ENCODE measurements at regions of chr17 and their contacts with region 1.

Region 1: GRCh38 chr17:77054936-77055335 is 85.8 kb upstream of the SEC14L1 start:
- DNase-seq: no peak
- ATAC-seq: no peak
- H3K4me3 Mint-ChIP-seq: no peak overlapping the region
- H3K27ac Mint-ChIP-seq: no peak overlapping the region
- H3K4me1 Mint-ChIP-seq: no peaks in the 10 kb centered on the region
- H3K27me3 Mint-ChIP-seq: peaks cover 1% of the 10 kb centered on the region
- CTCF ChIP-seq: no peak

Region 2: DNA sequence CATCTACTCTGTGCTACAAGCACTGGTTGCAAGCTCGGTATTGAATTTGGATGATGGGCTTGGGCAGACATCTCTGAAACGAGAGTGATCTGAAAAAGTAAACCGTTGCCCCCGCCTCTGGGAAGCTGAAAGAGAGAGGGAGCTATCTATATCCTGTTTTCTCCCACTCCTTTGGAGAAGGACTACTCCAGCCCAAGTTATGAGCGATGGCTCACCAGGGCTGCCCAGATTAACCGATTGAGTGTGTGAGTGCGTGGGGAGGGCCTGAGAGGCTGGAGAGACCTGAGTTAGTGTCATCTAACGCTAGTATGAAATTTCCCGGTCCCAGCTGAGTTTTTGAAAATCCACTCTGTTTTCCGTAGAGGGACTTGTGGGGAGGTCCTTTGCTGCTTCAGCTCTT is 175.2 kb before region 1 on chr17:
- CTCF ChIA-PET with region 1: interaction called, 13 read pairs
- POLR2A ChIA-PET with region 1: no interaction called
- intact Hi-C with region 1: no loop called
- DNase-seq: no peak
- ATAC-seq: no peak
- H3K4me3 Mint-ChIP-seq: no peak overlapping the region
- H3K27ac Mint-ChIP-seq: no peak overlapping the region
- H3K4me1 Mint-ChIP-seq: no peaks in the 10 kb centered on the region
- H3K27me3 Mint-ChIP-seq: no peaks in the 10 kb centered on the region
- CTCF ChIP-seq: no peak

Region 3: GRCh38 chr17:77022766-77023165 is 32.2 kb before region 1 on chr17:
- CTCF ChIA-PET with region 1: interaction called, 14 read pairs
- POLR2A ChIA-PET with region 1: no interaction called
- intact Hi-C with region 1: no loop called
- DNase-seq: no peak
- ATAC-seq: no peak
- H3K4me3 Mint-ChIP-seq: no peak overlapping the region
- H3K27ac Mint-ChIP-seq: no peak overlapping the region
- H3K4me1 Mint-ChIP-seq: no peaks in the 10 kb centered on the region
- H3K27me3 Mint-ChIP-seq: no peaks in the 10 kb centered on the region
- CTCF ChIP-seq: no peak

Region 4: GRCh38 chr17:77068915-77069314 is 14.0 kb after region 1 on chr17:
- CTCF ChIA-PET with region 1: interaction called, 30 read pairs
- POLR2A ChIA-PET with region 1: no interaction called
- intact Hi-C with region 1: no loop called
- DNase-seq: no peak
- ATAC-seq: no peak
- H3K4me3 Mint-ChIP-seq: no peak overlapping the region
- H3K27ac Mint-ChIP-seq: no peak overlapping the region
- H3K4me1 Mint-ChIP-seq: no peaks in the 10 kb centered on the region
- H3K27me3 Mint-ChIP-seq: peaks cover 22% of the 10 kb centered on the region
- CTCF ChIP-seq: no peak

Region 5: DNA sequence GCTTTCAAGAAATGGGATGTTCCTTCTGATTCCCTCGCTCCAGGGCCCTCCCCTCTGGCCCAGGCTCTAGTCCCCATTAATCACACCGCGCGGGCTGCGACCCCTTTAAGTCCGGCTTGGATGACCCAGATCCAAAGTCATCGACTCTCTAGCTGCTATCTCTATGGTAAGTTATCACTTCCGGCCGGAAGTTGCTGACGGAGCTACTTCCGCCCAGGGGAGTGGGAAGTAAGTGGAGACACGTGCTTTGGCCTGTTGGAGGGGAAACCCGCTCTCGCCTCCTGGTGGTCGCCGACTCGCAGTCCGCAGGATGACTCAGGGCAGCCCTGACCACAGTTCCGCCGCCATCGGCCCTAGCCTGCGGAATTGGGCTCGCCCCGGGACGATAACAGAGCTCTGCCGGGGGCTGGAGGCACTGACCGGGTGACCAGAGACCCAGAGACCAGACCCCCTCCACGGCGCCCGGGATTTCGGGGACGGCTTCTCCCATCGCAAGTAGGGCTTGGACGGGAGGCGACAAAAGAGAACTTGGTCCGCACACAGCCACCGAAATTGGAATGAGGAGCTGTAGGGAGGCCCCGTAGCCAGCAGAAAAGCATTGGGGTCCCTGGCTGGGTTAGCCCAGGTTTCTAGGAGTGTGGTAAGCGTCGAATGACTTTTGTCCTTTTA is 33.7 kb after region 1 on chr17:
- CTCF ChIA-PET with region 1: interaction called, 12 read pairs
- POLR2A ChIA-PET with region 1: no interaction called
- intact Hi-C with region 1: no loop called
- DNase-seq: peak; percentile 93
- ATAC-seq: peak; percentile 88
- H3K4me3 Mint-ChIP-seq: peak overlapping the region; percentile 90
- H3K27ac Mint-ChIP-seq: peak overlapping the region; percentile 92
- H3K4me1 Mint-ChIP-seq: peaks cover 49% of the 10 kb centered on the region
- H3K27me3 Mint-ChIP-seq: no peaks in the 10 kb centered on the region
- CTCF ChIP-seq: peak; percentile 71